ENCODE measurements at regions of chr4 and their contacts with region 1.

Region 1: GRCh38 chr4:124118084-124118460 is 594.5 kb downstream of the ANKRD50 start:
- DNase-seq: no peak
- ATAC-seq: no peak
- H3K4me3 ChIP-seq: no peak overlapping the region
- H3K27ac ChIP-seq: no peak overlapping the region
- H3K4me1 ChIP-seq: no peaks in the 10 kb centered on the region
- H3K27me3 ChIP-seq: no peaks in the 10 kb centered on the region
- CTCF ChIP-seq: no peak
- POLR2A ChIP-seq: no peak

Region 2: GRCh38 chr4:123114915-123115756 is 1002.9 kb before region 1 on chr4:
- intact Hi-C with region 1: loop called in 2 of 10 experiments (anchors 5 kb)
- DNase-seq: peak in 2 of 5 donors; percentile 20 to 63
- ATAC-seq: peak in 1 of 4 donors; percentile 18
- H3K4me3 ChIP-seq: no peak overlapping the region
- H3K27ac ChIP-seq: no peak overlapping the region
- H3K4me1 ChIP-seq: peaks cover 0 to 13% (median 2%) of the 10 kb centered on the region in 12 donors
- H3K27me3 ChIP-seq: no peaks in the 10 kb centered on the region
- CTCF ChIP-seq: no peak
- POLR2A ChIP-seq: no peak

Region 3: DNA sequence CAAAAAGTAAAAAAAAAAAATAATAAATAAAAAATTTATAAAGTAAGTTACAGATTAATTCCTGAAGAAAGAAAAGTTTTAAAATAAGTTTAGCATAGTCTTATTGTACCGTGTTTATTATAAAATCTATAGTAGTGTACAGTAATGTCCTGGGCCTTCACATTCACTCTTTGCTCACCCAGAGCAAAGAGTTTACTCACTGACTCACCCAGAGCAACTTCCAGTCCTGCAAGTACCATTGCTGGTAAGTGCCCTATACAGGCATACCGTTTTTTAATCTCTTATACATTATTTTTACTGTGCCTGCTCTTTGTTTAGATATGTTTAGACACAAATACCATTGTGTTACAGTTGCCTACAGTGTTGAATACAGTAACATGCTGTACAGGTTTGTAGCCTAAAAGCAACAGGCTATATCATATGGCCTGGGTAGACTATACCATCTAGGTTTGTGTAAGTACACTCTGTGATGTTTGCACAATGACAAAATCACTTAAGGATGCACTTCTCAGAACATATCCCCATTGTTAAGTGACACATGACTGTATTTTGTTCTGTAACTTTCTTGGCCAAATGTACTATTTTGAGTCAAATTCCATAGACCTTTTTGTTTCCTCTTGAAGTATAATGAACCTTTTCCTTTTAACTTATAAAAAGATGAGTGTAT is 996.7 kb before region 1 on chr4:
- intact Hi-C with region 1: loop called in 5 of 10 experiments (anchors 2 to 5 kb)
- DNase-seq: no peak
- ATAC-seq: no peak
- H3K4me3 ChIP-seq: no peak overlapping the region
- H3K27ac ChIP-seq: no peak overlapping the region
- H3K4me1 ChIP-seq: peaks cover 0 to 5% (median 0%) of the 10 kb centered on the region in 12 donors
- H3K27me3 ChIP-seq: no peaks in the 10 kb centered on the region
- CTCF ChIP-seq: no peak
- POLR2A ChIP-seq: no peak